ENCODE measurements at regions of chr21 and their contacts with region 1.

Region 1: GRCh38 chr21:15483138-15483780 is 246.5 kb upstream of the USP25 start:
- DNase-seq: peak; percentile 94
- H3K4me3 ChIP-seq: no peak overlapping the region
- H3K27ac ChIP-seq: no peak overlapping the region
- H3K4me1 ChIP-seq: peaks cover 0 to 10% (median 6%) of the 10 kb centered on the region in 6 donors
- H3K27me3 ChIP-seq: no peaks in the 10 kb centered on the region
- CTCF ChIP-seq: peak; percentile 73 to 92 (median 88)
- POLR2A ChIP-seq: no peak

Region 2: DNA sequence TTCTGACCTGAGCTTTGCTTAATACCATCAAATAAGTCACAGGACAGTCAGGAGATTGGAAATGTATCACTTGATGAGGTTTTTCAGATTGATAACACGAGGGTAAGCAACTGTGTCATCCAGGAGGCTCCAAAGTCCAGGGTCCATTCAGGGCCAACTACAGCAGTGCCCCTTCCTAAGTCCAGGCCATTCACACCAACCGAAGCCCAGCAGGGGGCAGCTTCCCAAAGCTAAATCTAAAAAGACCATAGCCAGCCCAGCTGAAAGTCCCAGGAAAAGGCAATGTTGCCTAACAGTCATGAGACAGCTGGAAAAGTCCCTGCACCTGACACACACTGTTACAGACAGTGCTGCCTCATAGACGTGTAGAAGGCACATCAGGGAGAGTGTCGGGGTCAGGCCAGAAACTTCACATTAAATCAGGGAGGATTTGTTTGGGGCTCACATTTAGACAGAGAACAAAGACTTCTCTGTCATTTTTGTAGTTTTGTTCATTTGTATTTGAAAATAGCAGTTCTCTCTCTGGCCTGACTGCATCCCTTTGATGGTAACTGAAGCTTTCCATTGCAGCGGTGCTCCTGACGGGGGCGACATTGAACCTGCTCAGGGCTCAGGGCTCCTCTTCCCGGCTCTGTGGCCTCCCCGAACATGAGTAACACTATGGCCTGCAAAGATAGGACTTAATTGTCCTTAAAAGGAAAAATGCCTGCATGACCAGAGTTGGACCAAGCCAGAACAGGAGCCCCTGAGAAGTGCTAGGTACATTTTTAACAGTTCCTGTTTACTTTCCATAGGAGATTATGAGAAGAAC is 618.8 kb before region 1 on chr21:
- intact Hi-C with region 1: loop called (anchors 5 kb)
- DNase-seq: peak; percentile 79
- H3K4me3 ChIP-seq: no peak overlapping the region
- H3K27ac ChIP-seq: peak overlapping the region in 1 of 8 donors; percentile 14
- H3K4me1 ChIP-seq: peaks cover 3 to 64% (median 38%) of the 10 kb centered on the region in 6 donors
- H3K27me3 ChIP-seq: no peaks in the 10 kb centered on the region
- CTCF ChIP-seq: peak; percentile 5 to 70 (median 54)
- POLR2A ChIP-seq: no peak

Region 3: DNA sequence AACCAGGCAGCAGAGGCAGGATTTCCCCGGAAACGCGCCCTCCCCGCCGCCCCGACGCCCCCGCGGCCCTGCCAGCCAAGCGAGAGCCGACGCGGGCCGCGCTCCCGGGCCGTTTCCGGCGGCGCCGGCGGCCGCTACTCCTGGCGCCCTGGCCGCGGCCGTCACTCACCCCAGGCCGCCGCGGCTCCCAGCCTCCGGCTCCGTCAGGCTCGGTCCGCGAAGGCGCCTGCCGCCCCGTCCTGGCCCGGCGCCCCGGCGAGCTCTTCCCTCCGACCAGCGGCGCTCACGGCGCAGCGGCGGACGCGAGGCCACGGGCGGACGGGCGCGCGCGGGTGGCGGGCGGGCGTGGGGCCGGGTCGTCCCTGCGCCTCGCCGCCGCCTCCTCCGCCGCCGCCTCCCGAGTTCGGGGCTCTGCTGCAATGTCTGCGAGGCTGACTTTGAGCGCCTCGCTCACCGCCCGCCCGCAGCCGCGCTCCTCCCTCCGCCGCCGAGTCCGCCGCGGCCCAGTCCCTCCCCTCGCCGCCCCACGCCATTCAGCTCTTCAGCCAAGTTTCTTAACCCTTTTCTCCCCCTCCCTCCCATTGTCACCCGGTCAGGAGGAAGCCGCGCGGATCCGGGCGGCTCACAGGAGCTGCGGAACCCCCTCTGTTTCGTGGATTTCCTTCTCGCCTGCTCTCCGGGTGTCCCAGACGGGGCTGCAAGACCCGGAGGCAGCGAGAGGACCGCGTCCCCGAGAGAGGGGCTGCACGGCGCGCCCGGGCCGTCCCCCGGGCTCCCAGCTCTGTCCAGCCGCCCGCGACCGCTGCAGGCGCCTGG is 418.5 kb before region 1 on chr21 and contains the start of gene NRIP1:
- intact Hi-C with region 1: loop called (anchors 5 kb)
- DNase-seq: peak; percentile 98
- H3K4me3 ChIP-seq: peak within 1 kb of the TSS; percentile 70 to 87 (median 74)
- H3K27ac ChIP-seq: peak within 1 kb of the TSS; percentile 92 to 99 (median 97)
- H3K4me1 ChIP-seq: peaks cover 17 to 58% (median 46%) of the 10 kb centered on the region in 6 donors
- H3K27me3 ChIP-seq: no peaks in the 10 kb centered on the region
- CTCF ChIP-seq: no peak
- POLR2A ChIP-seq: peak in 2 of 3 donors; percentile 84 to 86
- total RNA-seq, gene NRIP1: 49.4 to 67.8 (median 53.8) TPM

Region 4: GRCh38 chr21:15617964-15618363 is 134.7 kb after region 1 on chr21:
- intact Hi-C with region 1: no loop called
- DNase-seq: no peak
- H3K4me3 ChIP-seq: no peak overlapping the region
- H3K27ac ChIP-seq: no peak overlapping the region
- H3K4me1 ChIP-seq: no peaks in the 10 kb centered on the region
- H3K27me3 ChIP-seq: no peaks in the 10 kb centered on the region
- CTCF ChIP-seq: no peak
- POLR2A ChIP-seq: no peak